WTC11 (cell line): ENCODE measurements at regions of chr17 and their contacts with region 1.

Region 1: DNA sequence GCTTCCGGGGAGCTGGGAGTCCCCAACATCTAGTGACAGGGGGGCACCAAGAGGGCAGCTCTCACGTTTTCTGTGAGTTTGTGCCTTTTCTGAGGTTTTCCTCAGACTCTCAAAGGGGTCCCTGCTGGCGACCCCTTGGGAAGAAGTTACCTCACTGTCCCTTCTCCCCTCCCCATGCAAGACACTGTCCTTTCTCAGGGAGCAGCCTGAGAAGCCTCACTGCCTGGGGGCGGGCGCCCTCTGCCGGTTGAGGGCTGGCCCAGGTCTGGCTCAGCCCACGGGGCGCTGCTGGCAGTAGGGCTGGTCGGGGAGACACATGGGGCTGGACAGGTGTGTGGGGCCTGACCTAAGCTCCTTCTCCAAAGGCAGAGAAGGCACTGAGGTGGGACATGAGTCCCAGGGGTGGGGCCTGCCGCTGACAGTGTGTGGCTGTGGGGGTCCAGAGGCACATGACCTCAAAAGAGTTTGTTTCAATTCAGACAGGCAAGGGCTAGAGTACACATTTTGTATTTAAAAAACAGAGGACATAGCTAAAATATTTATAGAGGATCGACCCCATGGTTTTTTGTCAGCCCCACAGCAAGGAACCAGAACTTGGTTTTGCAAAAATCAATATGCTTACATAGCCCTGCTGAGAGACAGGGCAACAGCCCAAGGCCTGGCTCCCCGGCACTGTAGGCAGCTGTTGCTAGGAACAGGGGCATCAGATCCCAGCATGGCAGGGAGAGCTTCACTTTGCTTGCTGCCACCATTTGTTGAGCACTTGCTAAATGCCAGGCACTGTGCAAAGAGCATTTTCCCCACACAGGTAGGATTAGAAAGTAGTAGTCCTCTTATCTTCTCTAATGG is 18.5 kb upstream of the ALDH3A1 start:
- DNase-seq: peak; percentile 90
- ATAC-seq: peak; percentile 91
- H3K4me3 Mint-ChIP-seq: no peak overlapping the region
- H3K27ac Mint-ChIP-seq: no peak overlapping the region
- H3K4me1 Mint-ChIP-seq: 0 out of 2 replicates have a peak, but pooled peaks cover 2% of the 10 kb centered on the region
- H3K27me3 Mint-ChIP-seq: no peaks in the 10 kb centered on the region
- CTCF ChIP-seq: peak; percentile 64; the same call in 1 of the 2 replicates

Region 2: GRCh38 chr17:19377602-19378392 is 388.8 kb before region 1 on chr17:
- CTCF ChIA-PET with region 1: interaction called, 14 read pairs
- POLR2A ChIA-PET with region 1: no interaction called
- DNase-seq: peak; percentile 99
- ATAC-seq: peak; percentile 93
- H3K4me3 Mint-ChIP-seq: peak overlapping the region; percentile 99
- H3K27ac Mint-ChIP-seq: peak overlapping the region; percentile 97
- H3K4me1 Mint-ChIP-seq: peaks cover 16% of the 10 kb centered on the region
- H3K27me3 Mint-ChIP-seq: no peaks in the 10 kb centered on the region
- CTCF ChIP-seq: no peak

Region 3: DNA sequence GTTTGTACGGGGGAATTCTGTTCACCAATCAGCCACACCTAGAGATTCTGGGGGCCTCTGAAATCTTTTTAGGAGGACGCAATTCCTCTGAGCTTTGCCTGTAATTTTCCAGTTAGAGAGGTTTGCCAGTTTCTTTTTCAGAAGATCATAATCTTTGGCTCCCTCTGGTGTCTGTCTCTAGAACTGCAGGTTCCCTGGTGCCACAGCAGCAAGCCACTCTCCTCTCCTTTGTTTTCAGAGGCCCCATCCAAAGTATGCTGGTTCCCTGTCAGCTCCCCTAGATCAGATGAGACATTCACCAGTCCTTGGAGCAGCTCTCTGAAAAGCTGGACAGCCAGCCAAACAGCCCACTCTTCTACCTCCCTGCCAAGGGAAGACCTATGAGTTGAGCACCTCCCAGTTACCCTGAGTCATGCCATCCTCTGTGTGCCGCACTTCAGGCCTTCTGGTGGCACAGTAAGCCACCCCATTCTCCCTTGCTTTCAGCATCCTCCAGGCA is 319.5 kb before region 1 on chr17:
- CTCF ChIA-PET with region 1: interaction called, 10 read pairs
- POLR2A ChIA-PET with region 1: no interaction called
- DNase-seq: peak; percentile 80
- ATAC-seq: peak; percentile 90
- H3K4me3 Mint-ChIP-seq: no peak overlapping the region
- H3K27ac Mint-ChIP-seq: peak overlapping the region; percentile 63
- H3K4me1 Mint-ChIP-seq: peaks cover 25% of the 10 kb centered on the region
- H3K27me3 Mint-ChIP-seq: peaks cover 10% of the 10 kb centered on the region
- CTCF ChIP-seq: peak; percentile 99

Region 4: GRCh38 chr17:19614900-19615299 is 151.7 kb before region 1 on chr17:
- CTCF ChIA-PET with region 1: interaction called, 34 read pairs
- POLR2A ChIA-PET with region 1: no interaction called
- DNase-seq: no peak
- ATAC-seq: no peak
- H3K4me3 Mint-ChIP-seq: no peak overlapping the region
- H3K27ac Mint-ChIP-seq: no peak overlapping the region
- H3K4me1 Mint-ChIP-seq: no peaks in the 10 kb centered on the region
- H3K27me3 Mint-ChIP-seq: peaks cover 6% of the 10 kb centered on the region; the same call in 1 of the 2 replicates
- CTCF ChIP-seq: no peak

Region 5: DNA sequence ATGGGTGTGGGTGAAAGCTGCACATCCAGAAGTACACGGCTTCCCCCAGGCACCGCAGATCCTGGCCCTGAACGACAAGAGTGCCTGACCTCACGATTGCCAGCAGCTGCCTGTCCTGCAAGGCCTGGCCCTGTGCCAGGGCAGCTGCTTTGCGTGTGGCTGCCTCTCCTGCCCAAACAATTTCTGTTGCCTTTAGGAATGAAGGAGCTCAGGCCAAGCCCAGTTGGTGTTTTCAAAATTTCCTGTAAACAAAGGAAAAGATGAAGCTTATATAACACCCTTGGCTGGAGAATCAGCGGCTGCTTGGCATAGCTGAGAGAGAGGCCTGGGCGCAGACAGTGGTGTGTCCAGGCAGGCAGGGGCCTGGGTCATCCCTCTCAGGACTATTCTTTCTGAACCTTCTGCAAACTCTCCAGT is 38.6 kb before region 1 on chr17:
- CTCF ChIA-PET with region 1: interaction called, 15 read pairs
- POLR2A ChIA-PET with region 1: interaction called, 4 read pairs
- DNase-seq: no peak
- ATAC-seq: no peak
- H3K4me3 Mint-ChIP-seq: no peak overlapping the region
- H3K27ac Mint-ChIP-seq: no peak overlapping the region
- H3K4me1 Mint-ChIP-seq: no peaks in the 10 kb centered on the region
- H3K27me3 Mint-ChIP-seq: no peaks in the 10 kb centered on the region; the same call in none of the 2 replicates
- CTCF ChIP-seq: no peak

Region 6: DNA sequence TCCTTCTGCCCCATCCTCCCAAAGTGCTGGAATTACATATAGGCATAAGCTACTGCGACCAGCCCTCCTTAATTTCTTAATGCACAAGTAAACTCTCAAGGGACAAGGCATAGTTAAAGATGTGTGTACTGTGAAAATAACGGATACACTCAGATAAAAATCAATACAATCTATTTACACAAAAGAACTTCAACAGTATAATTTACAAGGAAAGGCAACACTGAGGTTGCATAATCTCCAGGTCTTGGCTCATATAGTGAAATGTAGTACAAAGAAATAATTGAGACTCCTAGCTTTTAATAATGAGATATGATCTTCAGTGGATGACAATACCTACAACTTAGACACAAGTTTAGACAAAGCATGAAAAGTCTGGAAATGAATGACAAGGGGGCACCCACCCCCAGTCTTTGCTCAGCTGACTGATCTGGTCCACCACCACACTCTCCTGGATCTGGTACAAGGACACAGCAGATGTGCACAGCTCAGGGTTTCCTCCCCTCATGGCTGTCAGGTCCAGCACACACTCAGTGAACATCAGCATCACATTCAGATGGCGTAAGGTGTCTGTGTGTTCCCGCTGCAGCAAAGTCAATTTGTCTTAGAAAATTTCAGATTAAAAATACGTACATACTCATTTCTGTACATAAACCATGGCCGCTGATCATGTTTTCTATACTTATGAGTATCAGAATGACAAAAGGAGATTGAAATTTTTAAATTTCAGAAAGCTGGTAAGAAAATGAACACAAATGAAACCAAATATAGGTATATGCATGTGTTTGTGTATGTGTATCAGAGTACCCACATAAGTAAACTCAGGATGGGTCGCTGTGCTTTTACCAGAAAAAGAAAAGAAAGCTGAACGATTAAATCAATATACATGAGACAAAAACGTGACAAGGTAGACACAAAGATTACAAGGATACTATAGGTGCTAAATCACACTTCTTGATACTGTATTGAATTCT is 15.1 kb after region 1 on chr17:
- CTCF ChIA-PET with region 1: interaction called, 16 read pairs
- POLR2A ChIA-PET with region 1: no interaction called
- DNase-seq: no peak
- ATAC-seq: no peak
- H3K4me3 Mint-ChIP-seq: no peak overlapping the region
- H3K27ac Mint-ChIP-seq: no peak overlapping the region
- H3K4me1 Mint-ChIP-seq: no peaks in the 10 kb centered on the region
- H3K27me3 Mint-ChIP-seq: no peaks in the 10 kb centered on the region
- CTCF ChIP-seq: no peak

Region 7: DNA sequence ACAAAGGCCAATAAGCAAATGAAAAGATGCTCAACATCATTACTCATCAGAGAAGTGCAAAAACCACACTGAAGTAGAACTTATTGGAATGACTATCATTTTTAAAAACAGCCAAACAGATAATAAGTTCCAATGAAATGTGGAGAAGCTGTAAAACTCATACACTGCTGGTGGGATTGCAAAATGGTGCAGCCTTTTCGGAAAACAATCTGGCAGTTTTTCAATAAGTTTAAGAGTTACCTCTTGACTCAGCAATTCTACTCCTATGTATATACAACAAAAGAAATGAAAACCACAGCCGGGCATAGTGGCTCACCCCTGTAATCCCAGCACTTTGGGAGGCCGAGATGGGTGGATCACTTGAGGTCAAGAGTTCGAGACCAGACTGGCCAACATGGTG is 161.7 kb after region 1 on chr17:
- CTCF ChIA-PET with region 1: no interaction called
- POLR2A ChIA-PET with region 1: no interaction called
- DNase-seq: no peak
- ATAC-seq: no peak
- H3K4me3 Mint-ChIP-seq: no peak overlapping the region
- H3K27ac Mint-ChIP-seq: no peak overlapping the region
- H3K4me1 Mint-ChIP-seq: no peaks in the 10 kb centered on the region
- H3K27me3 Mint-ChIP-seq: no peaks in the 10 kb centered on the region
- CTCF ChIP-seq: no peak